Posterior vena cava (tissue), 2 donors: ENCODE measurements at regions of chr2 and their contacts with region 1.

Region 1: GRCh38 chr2:16608661-16609643 is 56.7 kb downstream of the CYRIA start:
- DNase-seq: peak; percentile 95

Region 2: GRCh38 chr2:15939854-15940660 is 668.9 kb before region 1 on chr2 and contains the start of gene MYCN:
- intact Hi-C with region 1: loop called in 1 of 2 experiments (anchors 5 kb)
- DNase-seq: peak; percentile 88
- total RNA-seq, gene MYCN: 0.88 to 1.1 TPM

Region 3: GRCh38 chr2:16553226-16553625 is 55.7 kb before region 1 on chr2:
- intact Hi-C with region 1: loop called in 1 of 2 experiments (anchors 10 kb)
- DNase-seq: no peak

Region 4: DNA sequence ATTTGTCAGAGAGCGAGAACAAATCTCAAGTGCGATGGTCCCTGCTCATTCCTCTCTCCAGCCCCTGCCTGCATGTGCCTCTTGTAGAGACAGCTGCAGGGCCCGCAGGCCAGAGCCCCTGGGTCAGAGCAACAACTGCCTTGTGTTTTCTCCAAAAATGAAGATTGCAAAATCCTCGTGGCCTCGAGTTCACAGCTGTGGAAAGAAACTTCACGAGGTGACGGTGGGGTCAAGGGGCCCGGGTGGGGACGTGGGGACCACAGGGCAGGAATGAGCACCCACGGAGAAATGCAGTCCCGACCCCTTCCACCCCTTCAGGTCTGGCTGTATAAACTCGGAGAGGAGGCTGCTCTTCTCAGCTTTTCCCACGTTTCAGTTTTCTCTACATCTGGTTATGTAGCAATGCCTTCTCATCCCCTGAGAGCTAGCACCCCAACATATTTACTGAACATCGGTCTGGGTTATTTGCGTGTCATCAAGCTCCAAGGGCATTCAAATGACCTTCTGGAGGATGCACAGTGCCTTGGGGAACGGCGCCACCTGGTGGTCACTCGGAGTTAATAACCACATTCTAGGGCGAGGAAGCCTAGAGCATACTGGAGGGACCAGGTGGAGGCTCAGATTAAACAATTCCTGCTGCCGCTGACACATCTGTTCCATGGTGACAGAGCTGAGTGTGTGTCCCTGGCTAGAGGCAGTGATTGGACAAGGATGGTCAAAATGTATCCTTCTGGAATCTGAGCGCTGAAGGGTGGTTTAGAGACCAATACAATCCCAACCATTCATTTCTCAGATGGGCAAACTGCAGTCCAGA is 148.1 kb after region 1 on chr2:
- intact Hi-C with region 1: loop called (anchors 5 to 10 kb)
- DNase-seq: peak; percentile 95

Region 5: GRCh38 chr2:17620280-17620679 is 1011.3 kb after region 1 on chr2:
- intact Hi-C with region 1: loop called in 1 of 2 experiments (anchors 5 kb)
- DNase-seq: no peak